Dorsolateral prefrontal cortex (tissue), 120 donors: ENCODE measurements at regions of chr22 and their contacts with region 1.

Region 1: DNA sequence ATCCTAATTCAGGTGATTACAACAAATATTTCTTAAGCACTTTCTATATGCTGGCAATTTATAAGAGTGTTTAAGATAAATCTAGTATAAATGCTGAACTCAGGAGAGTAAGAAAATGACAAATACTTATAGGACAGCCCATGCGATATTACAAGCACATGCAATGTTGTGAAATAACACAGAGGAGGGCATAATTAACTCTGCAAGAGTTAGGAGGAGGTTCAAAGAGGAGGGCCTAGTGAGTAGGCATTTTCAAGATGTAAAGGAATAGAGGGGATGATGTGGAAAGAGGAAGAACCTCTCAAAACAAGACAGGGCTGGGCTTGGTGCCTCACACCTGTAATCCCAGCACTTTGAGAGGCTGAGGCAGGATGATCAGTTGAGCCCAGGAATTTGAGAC is 37.1 kb upstream of the IL17RA start:
- DNase-seq: no peak
- H3K4me3 ChIP-seq: no peak overlapping the region
- H3K27ac ChIP-seq: no peak overlapping the region
- H3K27me3 ChIP-seq: no peaks in the 10 kb centered on the region
- CTCF ChIP-seq: no peak

Region 2: GRCh38 chr22:16989915-16990314 is 57.7 kb before region 1 on chr22:
- intact Hi-C with region 1: loop called in 1 of 2 experiments (anchors 10 kb)
- DNase-seq: no peak
- H3K4me3 ChIP-seq: no peak overlapping the region
- H3K27ac ChIP-seq: no peak overlapping the region
- H3K27me3 ChIP-seq: peaks cover 0 to 23% (median 0%) of the 10 kb centered on the region in 45 donors
- CTCF ChIP-seq: no peak